ENCODE measurements at regions of chr1 and their contacts with region 1.

Region 1: GRCh38 chr1:149927503-149928387 is at the start of gene SF3B4:
- DNase-seq: peak; percentile 95
- ATAC-seq: peak; percentile 98 to 99
- H3K4me3 ChIP-seq: peak within 1 kb of the TSS; percentile 73 to 98 (median 92)
- H3K27ac ChIP-seq: peak within 1 kb of the TSS; percentile 92 to 98 (median 94)
- H3K4me1 ChIP-seq: peaks cover 29 to 33% of the 10 kb centered on the region in 2 donors
- H3K27me3 ChIP-seq: no peaks in the 10 kb centered on the region
- CTCF ChIP-seq: peak in 3 of 5 experiments; percentile 15 to 39 (median 31)
- POLR2A ChIP-seq: peak; percentile 81 to 89
- total RNA-seq, gene SF3B4: 4.4 to 17.4 (median 8.1) TPM

Region 2: DNA sequence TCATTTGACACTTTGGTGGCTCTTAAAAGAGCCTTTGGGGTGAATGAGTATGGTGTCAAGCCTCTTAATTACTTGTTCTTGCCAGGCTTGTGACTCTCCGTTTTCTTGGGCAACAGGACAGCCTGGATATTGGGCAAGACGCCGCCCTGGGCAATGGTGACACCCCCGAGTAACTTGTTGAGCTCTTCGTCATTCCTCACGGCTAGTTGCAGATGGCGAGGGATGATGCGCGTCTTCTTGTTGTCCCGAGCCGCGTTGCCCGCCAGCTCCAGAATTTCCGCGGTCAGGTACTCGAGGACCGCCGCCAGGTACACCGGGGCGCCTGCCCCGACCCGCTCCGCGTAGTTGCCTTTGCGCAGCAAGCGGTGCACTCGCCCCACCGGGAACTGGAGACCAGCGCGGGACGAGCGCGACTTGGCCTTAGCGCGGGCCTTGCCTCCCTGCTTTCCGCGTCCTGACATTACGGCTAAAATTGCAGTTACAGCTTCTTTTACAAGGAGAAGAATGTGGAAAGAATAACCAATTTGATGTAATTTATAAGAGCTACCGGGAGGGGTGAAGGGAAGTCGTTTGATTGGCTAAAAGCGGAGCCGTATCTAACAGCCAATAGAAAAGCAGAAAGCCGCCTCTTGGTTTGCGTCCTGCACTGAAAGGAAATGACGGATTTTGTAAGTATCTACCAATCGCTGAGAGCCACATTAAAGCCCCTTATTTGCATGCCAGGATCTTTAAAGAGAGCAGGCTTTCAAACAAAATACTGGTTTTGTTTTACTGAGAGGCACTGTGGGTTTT is 40.1 kb before region 1 on chr1:
- in situ Hi-C with region 1: no loop called
- intact Hi-C with region 1: loop called (anchors 1 kb)
- DNase-seq: peak; percentile 92
- ATAC-seq: peak; percentile 80 to 84
- H3K4me3 ChIP-seq: peak overlapping the region; percentile 64 to 87 (median 81)
- H3K27ac ChIP-seq: peak overlapping the region; percentile 95 to 99 (median 98)
- H3K4me1 ChIP-seq: peaks cover 22% of the 10 kb centered on the region in 2 donors
- H3K27me3 ChIP-seq: no peaks in the 10 kb centered on the region
- CTCF ChIP-seq: peak in 1 of 5 experiments; percentile 24
- POLR2A ChIP-seq: peak; percentile 70 to 88

Region 3: DNA sequence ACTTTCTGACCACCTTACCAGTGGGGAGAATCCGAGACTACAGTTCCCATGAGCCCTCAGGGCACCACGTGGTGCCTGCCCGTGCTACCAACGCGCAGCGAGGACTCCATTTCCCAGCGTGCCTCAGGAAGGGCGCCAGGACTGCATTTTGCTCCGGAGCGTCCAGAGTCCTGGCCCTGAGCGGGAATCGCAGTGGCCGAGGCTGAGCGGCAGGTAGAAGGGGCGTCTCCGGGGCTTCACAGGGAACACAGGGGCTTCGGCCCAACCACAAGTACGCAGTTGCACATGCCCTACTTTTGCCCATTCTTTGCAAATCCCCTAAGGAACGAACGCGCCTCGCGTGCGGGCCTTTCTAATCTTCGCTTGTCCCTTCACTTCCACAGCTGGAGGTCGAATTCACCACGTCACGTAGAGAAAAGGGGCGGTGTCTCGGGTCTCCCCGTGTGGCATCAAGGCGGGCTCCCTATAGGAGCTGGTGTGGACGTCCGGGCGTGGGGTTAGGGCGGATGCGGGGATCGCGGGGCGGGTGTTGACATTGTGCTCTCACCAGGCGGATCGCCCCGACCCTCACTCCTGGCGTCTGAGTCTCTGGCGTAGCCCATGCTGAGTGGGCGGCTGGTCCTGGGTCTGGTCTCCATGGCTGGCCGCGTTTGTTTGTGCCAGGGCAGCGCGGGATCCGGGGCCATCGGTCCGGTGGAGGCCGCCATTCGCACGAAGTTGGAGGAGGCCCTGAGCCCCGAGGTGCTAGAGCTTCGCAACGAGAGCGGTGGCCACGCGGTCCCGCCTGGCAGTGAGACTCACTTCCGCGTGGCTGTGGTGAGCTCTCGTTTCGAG is 28.1 kb before region 1 on chr1 and contains the start of gene BOLA1:
- in situ Hi-C with region 1: no loop called
- intact Hi-C with region 1: loop called (anchors 1 kb)
- DNase-seq: peak; percentile 91 to 92
- ATAC-seq: peak; percentile 99
- H3K4me3 ChIP-seq: peak within 1 kb of the TSS; percentile 59 to 81 (median 66)
- H3K27ac ChIP-seq: peak within 1 kb of the TSS; percentile 82 to 90 (median 88)
- H3K4me1 ChIP-seq: peaks cover 11% of the 10 kb centered on the region in 2 donors
- H3K27me3 ChIP-seq: no peaks in the 10 kb centered on the region
- CTCF ChIP-seq: no peak
- POLR2A ChIP-seq: peak; percentile 77 to 80
- total RNA-seq, gene BOLA1: 17.0 to 35.4 (median 28.7) TPM

Region 4: DNA sequence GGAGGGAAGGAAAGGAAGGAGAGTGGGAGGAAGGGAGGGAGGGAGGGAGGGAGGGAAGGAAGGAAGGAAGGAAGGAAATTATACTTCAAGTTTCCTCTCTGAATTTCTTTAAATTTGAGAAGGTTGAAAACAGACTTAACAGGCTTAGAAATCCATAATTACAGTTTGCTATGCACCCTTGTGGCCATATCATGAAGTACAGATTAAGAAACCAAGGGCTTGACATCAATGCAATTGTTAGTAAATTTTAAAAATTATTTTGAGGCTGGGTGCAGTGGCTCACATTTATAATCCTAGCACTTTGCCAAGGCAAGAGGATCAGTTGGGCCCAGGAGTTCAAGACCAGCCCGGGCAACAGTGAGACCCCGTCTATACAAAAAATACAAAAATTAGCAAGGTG is 293.8 kb after region 1 on chr1:
- in situ Hi-C with region 1: no loop called
- intact Hi-C with region 1: no loop called
- DNase-seq: no peak
- ATAC-seq: no peak
- H3K4me3 ChIP-seq: no peak overlapping the region
- H3K27ac ChIP-seq: no peak overlapping the region
- H3K4me1 ChIP-seq: no peaks in the 10 kb centered on the region
- H3K27me3 ChIP-seq: no peaks in the 10 kb centered on the region
- CTCF ChIP-seq: peak in 1 of 5 experiments; percentile 25
- POLR2A ChIP-seq: no peak

Measured in gastrocnemius medialis (tissue), 4 donors.